ENCODE measurements at regions of chr7 and their contacts with region 1.

Region 1: GRCh38 chr7:45136106-45137060 is 21.2 kb upstream of the RAMP3 start:
- DNase-seq: peak; percentile 52
- ATAC-seq: peak; percentile 80
- H3K4me3 Mint-ChIP-seq: no peak overlapping the region
- H3K27ac Mint-ChIP-seq: no peak overlapping the region
- H3K4me1 Mint-ChIP-seq: peaks cover 4% of the 10 kb centered on the region
- H3K27me3 Mint-ChIP-seq: no peaks in the 10 kb centered on the region; the same call in 1 of the 2 replicates
- CTCF ChIP-seq: peak; percentile 75

Region 2: DNA sequence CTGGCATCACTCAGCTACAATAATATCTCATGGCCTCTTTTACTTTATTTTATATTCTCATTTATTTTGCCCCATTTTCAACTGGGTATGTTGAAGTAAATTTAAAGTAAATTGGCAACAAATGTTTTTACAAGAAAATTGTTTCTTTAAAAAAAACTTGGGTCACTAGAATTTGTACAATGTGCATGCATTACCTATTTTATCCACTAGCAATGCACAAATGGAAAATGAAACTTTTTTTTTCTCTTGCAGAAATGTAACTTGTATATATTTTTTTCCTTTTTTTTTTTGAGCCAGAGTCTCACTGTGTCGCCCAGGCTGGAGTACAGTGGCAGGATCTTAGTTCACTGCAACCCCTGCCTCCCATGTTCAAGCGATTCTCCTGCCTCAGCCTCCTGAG is 278.2 kb before region 1 on chr7:
- CTCF ChIA-PET with region 1: interaction called, 10 read pairs
- POLR2A ChIA-PET with region 1: no interaction called
- DNase-seq: no peak
- ATAC-seq: no peak
- H3K4me3 Mint-ChIP-seq: no peak overlapping the region
- H3K27ac Mint-ChIP-seq: no peak overlapping the region
- H3K4me1 Mint-ChIP-seq: no peaks in the 10 kb centered on the region
- H3K27me3 Mint-ChIP-seq: no peaks in the 10 kb centered on the region
- CTCF ChIP-seq: no peak

Region 3: DNA sequence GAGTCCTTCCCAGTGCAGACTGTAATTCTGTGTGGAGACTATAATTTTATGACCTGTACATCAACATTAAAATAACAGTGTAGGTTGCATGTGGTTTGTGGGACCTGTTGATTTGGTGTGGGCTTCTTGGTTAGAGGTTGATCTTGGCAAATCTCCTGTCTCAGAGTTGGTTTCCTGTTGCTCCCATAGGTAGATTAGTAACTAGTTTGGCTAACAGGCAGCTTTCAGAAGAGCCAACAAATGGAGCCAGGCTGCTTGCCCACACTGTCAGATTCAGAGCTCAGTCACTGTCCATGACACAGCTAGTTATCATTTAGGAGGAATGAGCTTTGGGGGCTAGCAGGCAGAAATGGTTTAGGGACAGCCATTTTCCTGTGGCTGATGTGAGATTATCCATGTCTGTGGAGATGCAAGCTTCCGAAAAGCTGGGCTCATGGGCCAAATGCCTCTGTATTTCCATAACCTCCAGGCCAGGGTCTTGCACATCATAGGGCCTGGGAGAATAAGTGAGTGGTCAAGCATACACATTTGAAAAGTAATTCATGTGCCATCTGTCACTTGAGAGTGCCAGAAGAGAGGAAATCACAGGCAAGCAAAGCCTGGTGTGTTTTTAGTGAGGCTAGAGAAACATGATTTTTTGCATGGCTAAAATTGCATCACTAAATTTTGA is 103.0 kb before region 1 on chr7:
- CTCF ChIA-PET with region 1: interaction called, 10 read pairs
- POLR2A ChIA-PET with region 1: no interaction called
- DNase-seq: no peak
- ATAC-seq: no peak
- H3K4me3 Mint-ChIP-seq: no peak overlapping the region
- H3K27ac Mint-ChIP-seq: peak overlapping the region; percentile 90
- H3K4me1 Mint-ChIP-seq: peaks cover 32% of the 10 kb centered on the region
- H3K27me3 Mint-ChIP-seq: no peaks in the 10 kb centered on the region
- CTCF ChIP-seq: no peak

Region 4: DNA sequence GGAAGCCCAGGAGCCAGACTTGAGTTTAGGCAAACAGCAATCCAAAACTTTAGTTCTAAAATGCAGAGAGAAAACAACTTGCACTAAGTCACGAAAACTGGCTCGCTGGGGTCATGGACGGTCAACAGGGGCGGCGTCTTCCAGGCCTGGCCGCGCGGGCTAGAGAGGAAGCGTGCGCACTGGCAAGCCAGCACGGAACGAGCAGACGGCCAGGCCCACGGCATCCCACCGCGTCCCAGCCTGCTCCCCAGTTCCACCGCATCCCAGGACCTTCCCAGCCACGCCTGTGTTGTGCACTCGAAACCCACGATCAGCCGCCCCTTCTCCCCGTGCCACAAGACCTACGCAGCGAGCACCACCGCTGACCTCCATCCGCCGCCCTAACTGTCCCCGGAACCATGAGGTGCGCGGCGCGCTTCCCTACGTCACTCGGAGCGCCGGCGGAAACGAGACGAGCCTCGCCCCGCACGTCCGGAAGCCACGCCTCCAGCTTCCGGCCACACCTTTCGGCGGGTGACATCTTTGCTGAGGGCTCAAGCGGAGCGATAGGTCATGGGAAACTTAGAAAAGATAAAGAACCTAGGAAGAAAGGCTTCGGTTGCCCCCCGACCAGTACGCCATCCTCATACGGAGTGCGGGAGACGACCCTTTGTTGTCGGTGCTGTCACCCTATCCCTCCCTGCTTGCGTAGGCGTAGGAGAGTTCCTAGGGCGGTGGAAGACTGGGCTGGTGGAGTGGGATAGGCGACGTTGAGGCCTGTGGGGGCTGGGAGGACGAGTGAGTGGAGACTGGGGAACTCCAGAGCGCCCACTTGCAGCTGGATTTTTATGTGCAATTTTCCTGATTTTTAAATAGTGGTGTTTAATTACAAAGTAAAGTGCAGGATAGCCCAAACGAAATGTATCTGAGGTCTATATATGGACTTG is 24.8 kb before region 1 on chr7 and contains the start of gene TBRG4:
- CTCF ChIA-PET with region 1: interaction called, 15 read pairs
- POLR2A ChIA-PET with region 1: interaction called, 3 read pairs
- DNase-seq: peak; percentile 93
- ATAC-seq: peak; percentile 94
- H3K4me3 Mint-ChIP-seq: peak within 1 kb of the TSS; percentile 99
- H3K27ac Mint-ChIP-seq: peak within 1 kb of the TSS; percentile 99
- H3K4me1 Mint-ChIP-seq: peaks cover 12% of the 10 kb centered on the region
- H3K27me3 Mint-ChIP-seq: peaks cover 14% of the 10 kb centered on the region
- CTCF ChIP-seq: no peak
- total RNA-seq, gene TBRG4: 122 to 167 TPM (median 124 TPM) in 3 replicates

Region 5: GRCh38 chr7:45146531-45147379 is 10.4 kb after region 1 on chr7:
- CTCF ChIA-PET with region 1: interaction called, 16 read pairs
- POLR2A ChIA-PET with region 1: no interaction called
- DNase-seq: no peak
- ATAC-seq: no peak; the same call in 1 of the 2 replicates
- H3K4me3 Mint-ChIP-seq: no peak overlapping the region
- H3K27ac Mint-ChIP-seq: no peak overlapping the region
- H3K4me1 Mint-ChIP-seq: no peaks in the 10 kb centered on the region
- H3K27me3 Mint-ChIP-seq: no peaks in the 10 kb centered on the region; the same call in 1 of the 2 replicates
- CTCF ChIP-seq: no peak

Measured in WTC11 (cell line).